H1 (cell line): ENCODE measurements at regions of chr7 and their contacts with region 1.

Region 1: DNA sequence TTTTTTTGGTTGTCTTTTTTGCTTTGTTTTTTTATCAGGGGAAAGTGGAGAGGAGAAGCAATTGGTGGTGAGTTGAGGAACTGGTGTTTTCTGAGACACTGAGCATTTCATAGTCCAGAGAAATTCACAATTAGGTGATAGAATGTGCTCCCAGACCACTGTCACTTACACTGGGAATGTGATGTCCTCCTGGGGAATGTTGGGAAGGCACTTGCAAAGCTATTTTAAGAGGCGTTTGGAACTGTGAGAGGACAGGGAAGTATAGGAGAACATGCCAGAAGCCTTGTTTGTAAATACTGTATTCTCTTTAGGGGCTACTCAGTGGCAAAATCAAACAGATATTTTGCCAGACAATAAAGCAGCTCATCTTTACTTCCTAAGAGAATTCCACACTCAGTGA is 16.0 kb downstream of the CHRM2 start:
- DNase-seq: no peak
- H3K4me3 ChIP-seq: no peak overlapping the region
- H3K27ac ChIP-seq: no peak overlapping the region
- H3K4me1 ChIP-seq: peaks cover 0 to 3% (median 0%) of the 10 kb centered on the region in 4 experiments; a peak in 1 of 7 replicates
- H3K27me3 ChIP-seq: no peaks in the 10 kb centered on the region
- CTCF ChIP-seq: no peak
- EP300 ChIP-seq: no peak
- POLR2A ChIP-seq: no peak
- RAD21 ChIP-seq: no peak

Region 2: GRCh38 chr7:136874238-136875032 is 10.1 kb before region 1 on chr7:
- CTCF ChIA-PET with region 1: interaction called, 16 read pairs
- POLR2A ChIA-PET with region 1: no interaction called
- DNase-seq: no peak
- H3K4me3 ChIP-seq: no peak overlapping the region
- H3K27ac ChIP-seq: no peak overlapping the region
- H3K4me1 ChIP-seq: peaks cover 0 to 17% (median 8%) of the 10 kb centered on the region in 4 experiments; a peak in 6 of 7 replicates
- H3K27me3 ChIP-seq: peaks cover 28 to 40% (median 33%) of the 10 kb centered on the region in 4 experiments
- CTCF ChIP-seq: peak in 2 of 3 experiments; percentile 43 to 60; a peak in 3 of 4 replicates
- EP300 ChIP-seq: no peak
- POLR2A ChIP-seq: no peak
- RAD21 ChIP-seq: peak; percentile 55 to 59